Astrocyte of the cerebellum (primary cell): ENCODE measurements at regions of chr1 and their contacts with region 1.

Region 1: GRCh38 chr1:199510314-199510713 is 517.2 kb upstream of the NR5A2 start:
- DNase-seq: no peak
- H3K4me3 ChIP-seq: no peak overlapping the region
- CTCF ChIP-seq: no peak

Region 2: DNA sequence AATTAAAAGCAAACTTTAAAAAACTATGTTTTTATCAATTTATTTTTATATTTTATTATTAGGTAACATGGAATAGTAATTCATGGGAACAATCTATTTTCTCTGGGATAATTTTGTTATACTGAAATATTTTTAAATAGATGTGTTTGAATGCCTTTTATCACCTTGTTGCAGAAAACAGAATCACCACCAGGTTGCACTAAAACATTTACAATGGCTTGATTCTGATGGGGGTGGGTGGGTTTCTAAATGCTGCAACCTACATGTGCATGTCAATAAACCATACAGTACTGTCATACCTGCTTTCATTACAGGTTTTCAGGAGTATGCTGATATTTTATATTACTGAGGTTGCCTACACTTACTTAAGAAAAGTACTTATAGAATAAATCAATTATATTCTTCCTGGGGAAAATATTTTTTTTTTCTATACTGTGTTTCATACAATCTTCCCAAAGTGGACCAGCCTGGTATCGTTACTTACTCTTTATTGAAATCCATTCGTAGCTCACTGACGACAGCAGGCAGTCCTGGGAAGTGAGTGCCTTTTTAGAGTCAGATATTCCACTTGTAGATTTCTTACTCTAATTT is 738.7 kb before region 1 on chr1:
- in situ Hi-C with region 1: loop called (anchors 25 kb)
- DNase-seq: peak; percentile 49
- H3K4me3 ChIP-seq: no peak overlapping the region
- CTCF ChIP-seq: peak; percentile 55